GM18951 (cell line): ENCODE measurements at regions of chr3 and their contacts with region 1.

Region 1: GRCh38 chr3:11651900-11652299 is 8.2 kb upstream of the VGLL4 start:
- POLR2A ChIP-seq: no peak

Region 2: DNA sequence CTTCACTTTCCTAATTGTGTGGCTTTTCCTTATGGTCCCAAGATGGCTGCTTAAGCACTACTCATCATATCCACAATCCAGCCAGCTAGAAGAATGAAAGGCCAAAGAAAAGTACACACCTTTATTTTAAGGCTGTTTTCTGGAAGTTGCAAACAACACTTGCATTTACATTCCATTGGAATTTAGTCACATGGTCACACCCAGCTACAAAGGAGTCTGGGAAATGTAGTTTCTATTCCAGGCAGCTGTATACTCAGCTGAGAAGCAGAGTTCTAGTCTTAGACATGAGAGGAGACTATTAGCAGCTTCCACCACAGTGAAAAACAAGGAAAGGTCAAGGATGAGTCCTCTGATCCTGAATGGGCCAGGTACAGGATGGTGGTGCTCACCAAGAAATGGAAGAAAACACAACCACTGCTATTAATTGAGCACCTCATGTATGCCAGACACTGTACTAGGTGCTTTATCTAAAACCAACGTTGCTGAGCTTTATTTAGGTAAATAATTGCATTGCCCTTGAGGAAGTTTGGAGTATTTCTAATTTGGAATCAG is 407.7 kb before region 1 on chr3:
- in situ Hi-C with region 1: loop called (anchors 10 kb)
- POLR2A ChIP-seq: no peak

Region 3: GRCh38 chr3:11379824-11380701 is 271.8 kb before region 1 on chr3:
- in situ Hi-C with region 1: loop called (anchors 5 kb)
- POLR2A ChIP-seq: no peak